ENCODE measurements at regions of chr17 and their contacts with region 1.

Region 1: GRCh38 chr17:31558748-31559644 is 167.5 kb downstream of the RAB11FIP4 start:
- DNase-seq: peak; percentile 78 to 81
- ATAC-seq: peak; percentile 89

Region 2: DNA sequence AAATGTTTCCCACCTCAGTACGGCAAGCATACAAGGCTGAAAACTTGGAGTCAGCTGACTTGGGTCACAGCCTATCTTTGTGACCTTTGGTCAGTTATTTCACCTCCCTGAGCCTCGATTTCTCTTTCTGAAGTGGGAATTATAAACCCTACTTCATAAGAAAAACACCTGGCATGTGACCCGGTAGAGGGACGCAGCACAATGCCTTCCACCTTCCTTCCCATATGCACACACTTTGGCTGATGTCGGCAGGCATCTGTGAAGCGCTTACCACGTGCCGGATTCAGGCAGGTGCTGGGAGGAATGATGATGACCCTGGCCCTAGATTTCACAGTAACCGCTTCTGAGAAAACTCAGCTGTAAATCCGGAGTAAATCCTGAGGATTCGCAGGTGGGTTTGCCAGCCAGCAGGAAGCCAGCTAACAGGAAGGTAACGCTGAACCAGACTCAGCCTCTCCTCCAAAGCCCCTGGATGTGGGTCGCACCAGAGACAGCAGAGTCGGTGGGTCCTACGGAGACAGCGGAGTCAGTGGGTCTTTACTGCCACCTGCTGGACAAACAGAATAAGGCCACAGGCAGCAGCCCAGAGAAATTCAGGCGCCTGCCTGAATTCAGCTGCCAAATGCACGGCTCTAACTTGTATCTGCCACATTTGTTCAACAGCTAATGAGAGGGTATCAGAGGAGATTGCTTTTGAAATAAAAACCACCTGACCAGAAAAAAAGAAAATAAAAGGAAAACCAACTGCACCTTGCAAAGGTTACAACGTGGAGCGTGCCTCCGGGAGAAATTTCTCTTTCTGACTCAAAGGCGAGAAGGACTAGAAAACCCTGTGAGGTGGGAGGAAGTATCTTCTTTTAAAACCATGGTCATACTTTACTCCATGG is 283.4 kb after region 1 on chr17:
- intact Hi-C with region 1: loop called in 1 of 2 experiments (anchors 2 kb)
- DNase-seq: peak; percentile 65 to 72
- ATAC-seq: peak; percentile 87

Measured in left colon (tissue), 2 donors.